Activated CD4-positive, alpha-beta T cell treated with anti-CD3 and anti-CD28 coated beads for 36 hours (primary cell): ENCODE measurements at regions of chr3 and their contacts with region 1.

Region 1: GRCh38 chr3:120558771-120559241 is 37.3 kb upstream of the NDUFB4 start:
- DNase-seq: peak; percentile 93
- ATAC-seq: peak; percentile 68
- H3K4me3 Mint-ChIP-seq: peak overlapping the region; percentile 56
- H3K27ac Mint-ChIP-seq: peak overlapping the region; percentile 10
- H3K4me1 Mint-ChIP-seq: peaks cover 12% of the 10 kb centered on the region
- H3K27me3 Mint-ChIP-seq: peaks cover 6% of the 10 kb centered on the region

Region 2: GRCh38 chr3:119420196-119420595 is 1138.6 kb before region 1 on chr3:
- CTCF ChIA-PET with region 1: no interaction called
- POLR2A ChIA-PET with region 1: no interaction called
- intact Hi-C with region 1: no loop called
- DNase-seq: no peak
- ATAC-seq: no peak
- H3K4me3 Mint-ChIP-seq: no peak overlapping the region
- H3K27ac Mint-ChIP-seq: no peak overlapping the region
- H3K4me1 Mint-ChIP-seq: peaks cover 3% of the 10 kb centered on the region
- H3K27me3 Mint-ChIP-seq: no peaks in the 10 kb centered on the region

Region 3: GRCh38 chr3:119810018-119810435 is 748.8 kb before region 1 on chr3:
- CTCF ChIA-PET with region 1: no interaction called
- POLR2A ChIA-PET with region 1: no interaction called
- intact Hi-C with region 1: loop called in 1 of 2 experiments (anchors 10 kb)
- DNase-seq: peak; percentile 79
- ATAC-seq: peak; percentile 90
- H3K4me3 Mint-ChIP-seq: peak overlapping the region; percentile 62
- H3K27ac Mint-ChIP-seq: peak overlapping the region; percentile 65
- H3K4me1 Mint-ChIP-seq: peaks cover 9% of the 10 kb centered on the region
- H3K27me3 Mint-ChIP-seq: no peaks in the 10 kb centered on the region

Region 4: DNA sequence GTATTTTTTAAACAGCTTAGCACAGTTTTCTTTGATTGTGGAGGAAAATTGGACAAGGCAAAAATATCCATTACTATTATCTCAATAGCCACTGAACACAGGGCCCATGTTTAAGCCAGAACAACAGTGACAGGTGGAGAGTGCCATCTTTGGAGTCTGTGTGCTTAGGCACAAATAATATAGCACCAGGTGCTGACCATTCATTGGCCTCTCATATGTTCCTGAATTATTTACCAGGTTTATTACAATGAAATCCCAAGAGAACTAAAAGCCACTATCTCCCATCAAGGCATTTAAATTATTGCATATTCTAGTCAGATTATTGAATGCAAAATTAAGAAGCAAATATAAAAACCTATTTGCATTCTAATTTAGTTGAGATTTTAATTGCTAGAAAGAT is 313.4 kb before region 1 on chr3:
- CTCF ChIA-PET with region 1: interaction called, 23 read pairs
- POLR2A ChIA-PET with region 1: no interaction called
- intact Hi-C with region 1: loop called (anchors 1 to 2 kb)
- DNase-seq: no peak
- ATAC-seq: no peak
- H3K4me3 Mint-ChIP-seq: no peak overlapping the region
- H3K27ac Mint-ChIP-seq: no peak overlapping the region
- H3K4me1 Mint-ChIP-seq: no peaks in the 10 kb centered on the region
- H3K27me3 Mint-ChIP-seq: peaks cover 12% of the 10 kb centered on the region

Region 5: DNA sequence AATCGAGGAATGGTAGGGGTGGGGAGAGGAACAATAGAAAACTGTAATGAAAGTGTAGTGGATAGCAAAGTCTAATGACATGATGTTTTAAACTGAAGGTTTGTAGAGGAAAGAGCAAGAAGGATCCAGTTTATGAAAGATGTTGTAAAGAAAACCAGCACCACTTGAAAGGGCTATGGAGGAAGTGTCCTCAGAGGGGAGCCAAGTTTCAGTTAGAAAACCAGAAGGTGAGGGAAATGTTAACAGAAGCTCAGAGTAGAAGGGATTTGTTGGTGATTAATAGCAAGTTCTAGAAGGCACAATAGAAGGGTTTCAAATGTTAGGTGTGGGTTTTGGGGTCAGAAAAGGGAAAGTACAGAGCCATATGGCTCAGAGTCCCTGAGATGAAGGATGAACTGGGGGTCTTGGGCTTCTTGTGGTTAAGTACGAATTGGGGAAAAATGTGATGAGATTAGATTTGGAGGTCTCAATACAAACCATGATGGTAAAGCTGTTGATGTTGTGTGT is 175.8 kb before region 1 on chr3:
- CTCF ChIA-PET with region 1: no interaction called
- POLR2A ChIA-PET with region 1: no interaction called
- intact Hi-C with region 1: no loop called
- DNase-seq: no peak
- ATAC-seq: no peak
- H3K4me3 Mint-ChIP-seq: no peak overlapping the region
- H3K27ac Mint-ChIP-seq: no peak overlapping the region
- H3K4me1 Mint-ChIP-seq: no peaks in the 10 kb centered on the region
- H3K27me3 Mint-ChIP-seq: peaks cover 6% of the 10 kb centered on the region

Region 6: GRCh38 chr3:120742198-120742849 is 183.5 kb after region 1 on chr3 and contains the starts of genes GTF2E1 and RABL3:
- CTCF ChIA-PET with region 1: interaction called, 17 read pairs
- POLR2A ChIA-PET with region 1: no interaction called
- intact Hi-C with region 1: loop called in 1 of 2 experiments (anchors 1 kb)
- DNase-seq: peak; percentile 96
- ATAC-seq: peak; percentile 99
- H3K4me3 Mint-ChIP-seq: peak within 1 kb of the TSS; percentile 98
- H3K27ac Mint-ChIP-seq: peak within 1 kb of the TSS; percentile 95
- H3K4me1 Mint-ChIP-seq: peaks cover 28% of the 10 kb centered on the region
- H3K27me3 Mint-ChIP-seq: no peaks in the 10 kb centered on the region
- total RNA-seq, gene GTF2E1: 26.1 to 27.0 TPM
- total RNA-seq, gene RABL3: 35.5 to 37.8 TPM